ENCODE measurements at regions of chr4 and their contacts with region 1.

Region 1: DNA sequence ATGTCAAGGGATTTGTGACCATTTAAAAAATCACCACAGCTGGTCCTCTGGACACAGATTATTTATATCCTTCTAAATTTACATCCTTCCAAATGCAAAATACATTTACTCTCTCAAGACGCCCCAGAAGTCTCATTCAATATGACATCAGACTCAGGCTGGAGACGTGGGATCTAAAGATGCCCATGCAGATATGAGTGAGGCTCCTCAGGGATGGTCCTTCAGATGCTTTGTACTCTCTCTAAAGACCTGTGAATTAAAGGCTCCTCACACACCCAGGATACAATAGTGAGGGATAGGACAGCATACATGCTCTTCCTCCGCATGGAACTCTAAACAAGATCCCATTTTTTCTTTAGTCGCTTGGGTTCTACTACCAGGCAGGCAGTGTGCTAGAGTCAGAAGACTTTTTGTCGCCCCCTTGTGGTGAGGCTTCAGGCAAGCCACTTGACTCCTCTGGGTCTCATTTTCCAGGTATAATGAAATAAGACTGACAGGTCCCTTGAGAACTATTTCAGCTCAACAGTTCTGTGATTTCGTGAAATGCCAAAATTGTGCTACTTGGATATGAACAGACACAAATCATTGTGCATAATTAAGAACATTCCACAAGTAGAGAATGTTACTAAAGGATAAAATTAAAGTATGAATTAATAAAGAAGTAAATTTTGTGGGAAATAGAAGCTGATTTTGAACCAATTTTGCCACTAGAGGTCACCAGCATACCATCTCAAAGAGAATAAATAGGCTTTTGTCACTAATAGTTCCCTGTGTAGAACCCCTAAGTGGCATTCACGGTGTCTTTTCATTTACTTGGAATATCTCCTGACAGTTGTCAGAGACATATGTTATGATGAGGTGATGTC is 13.7 kb upstream of the SCOC start:
- DNase-seq: no peak
- H3K4me3 ChIP-seq: no peak overlapping the region
- H3K27ac ChIP-seq: no peak overlapping the region
- H3K4me1 ChIP-seq: no peaks in the 10 kb centered on the region
- H3K27me3 ChIP-seq: no peaks in the 10 kb centered on the region
- CTCF ChIP-seq: peak; percentile 68 to 82 (median 78)
- EP300 ChIP-seq: no peak
- POLR2A ChIP-seq: no peak

Region 2: GRCh38 chr4:140130677-140131076 is 229.1 kb before region 1 on chr4:
- intact Hi-C with region 1: no loop called
- DNase-seq: no peak
- H3K4me3 ChIP-seq: no peak overlapping the region
- H3K27ac ChIP-seq: no peak overlapping the region
- H3K4me1 ChIP-seq: peaks cover 6 to 12% (median 8%) of the 10 kb centered on the region in 4 donors
- H3K27me3 ChIP-seq: no peaks in the 10 kb centered on the region
- CTCF ChIP-seq: no peak
- EP300 ChIP-seq: no peak
- POLR2A ChIP-seq: no peak

Region 3: DNA sequence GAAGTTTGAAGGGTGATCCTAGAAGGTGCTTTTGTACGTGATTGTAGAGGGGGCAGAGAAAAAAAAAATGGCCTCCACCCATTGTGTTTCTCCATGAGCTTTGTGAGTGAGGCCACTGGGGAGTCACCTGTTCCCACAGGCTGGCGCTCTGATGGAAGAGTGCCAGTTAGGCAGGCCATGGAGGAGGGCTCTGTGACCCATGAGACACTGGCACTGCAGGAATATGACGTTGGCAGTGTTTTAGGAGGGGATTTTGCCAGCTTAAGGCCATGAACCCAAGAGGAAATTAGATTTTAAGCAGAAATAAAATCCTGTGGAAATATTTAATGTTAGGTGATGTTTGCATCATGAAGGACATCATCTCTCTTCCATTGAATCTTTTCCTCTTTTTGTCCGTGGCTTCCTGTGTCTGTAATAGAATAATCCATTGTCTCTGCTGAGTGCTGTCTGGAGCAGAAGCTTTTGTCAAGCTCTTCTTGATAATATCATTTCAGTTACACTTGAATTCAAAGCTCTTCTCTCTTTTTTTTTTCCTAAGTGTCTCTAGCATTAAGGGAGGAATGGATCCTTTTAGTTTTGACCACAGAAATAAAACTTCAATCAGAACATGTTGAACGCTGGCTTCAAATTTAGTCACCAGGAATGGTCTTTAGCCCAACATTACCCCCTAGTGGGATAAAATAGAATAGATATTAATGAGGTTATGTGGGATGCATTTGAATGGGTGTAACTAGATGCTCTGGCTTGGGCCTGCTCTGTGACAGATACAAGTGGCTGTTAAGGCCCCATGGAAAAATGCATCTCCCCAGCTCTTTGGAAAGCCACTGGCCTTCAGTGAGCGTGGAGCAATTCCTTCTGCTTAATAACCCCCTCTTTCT is 250.0 kb after region 1 on chr4:
- intact Hi-C with region 1: loop called (anchors 5 kb)
- DNase-seq: no peak
- H3K4me3 ChIP-seq: no peak overlapping the region
- H3K27ac ChIP-seq: no peak overlapping the region
- H3K4me1 ChIP-seq: peaks cover 0 to 7% (median 2%) of the 10 kb centered on the region in 4 donors
- H3K27me3 ChIP-seq: no peaks in the 10 kb centered on the region
- CTCF ChIP-seq: peak; percentile 41 to 54 (median 46)
- EP300 ChIP-seq: no peak
- POLR2A ChIP-seq: no peak

Region 4: DNA sequence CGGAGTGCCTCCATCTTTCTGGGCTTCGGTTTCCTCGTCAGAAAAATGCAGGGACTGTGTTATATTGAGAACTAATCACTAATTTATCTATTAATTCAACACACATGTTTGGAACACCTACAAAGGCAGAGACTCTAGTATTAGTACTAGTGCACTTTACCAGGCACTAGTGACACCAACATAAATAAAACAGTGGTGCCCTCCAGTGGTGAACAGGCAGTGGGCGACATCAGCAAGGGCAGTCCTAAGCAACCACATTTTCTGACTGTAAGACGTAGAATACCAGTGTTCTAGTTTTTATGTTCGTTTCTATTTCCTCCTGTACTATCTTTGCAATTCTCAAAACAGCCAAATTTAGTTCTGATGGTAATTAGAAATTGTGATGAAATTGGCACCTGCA is 278.0 kb after region 1 on chr4:
- intact Hi-C with region 1: no loop called
- DNase-seq: no peak
- H3K4me3 ChIP-seq: no peak overlapping the region
- H3K27ac ChIP-seq: no peak overlapping the region
- H3K4me1 ChIP-seq: peaks cover 0 to 4% (median 0%) of the 10 kb centered on the region in 4 donors
- H3K27me3 ChIP-seq: no peaks in the 10 kb centered on the region
- CTCF ChIP-seq: peak in 2 of 3 experiments; percentile 25 to 51
- EP300 ChIP-seq: no peak
- POLR2A ChIP-seq: no peak